ENCODE measurements at regions of chr7 and their contacts with region 1.

Region 1: DNA sequence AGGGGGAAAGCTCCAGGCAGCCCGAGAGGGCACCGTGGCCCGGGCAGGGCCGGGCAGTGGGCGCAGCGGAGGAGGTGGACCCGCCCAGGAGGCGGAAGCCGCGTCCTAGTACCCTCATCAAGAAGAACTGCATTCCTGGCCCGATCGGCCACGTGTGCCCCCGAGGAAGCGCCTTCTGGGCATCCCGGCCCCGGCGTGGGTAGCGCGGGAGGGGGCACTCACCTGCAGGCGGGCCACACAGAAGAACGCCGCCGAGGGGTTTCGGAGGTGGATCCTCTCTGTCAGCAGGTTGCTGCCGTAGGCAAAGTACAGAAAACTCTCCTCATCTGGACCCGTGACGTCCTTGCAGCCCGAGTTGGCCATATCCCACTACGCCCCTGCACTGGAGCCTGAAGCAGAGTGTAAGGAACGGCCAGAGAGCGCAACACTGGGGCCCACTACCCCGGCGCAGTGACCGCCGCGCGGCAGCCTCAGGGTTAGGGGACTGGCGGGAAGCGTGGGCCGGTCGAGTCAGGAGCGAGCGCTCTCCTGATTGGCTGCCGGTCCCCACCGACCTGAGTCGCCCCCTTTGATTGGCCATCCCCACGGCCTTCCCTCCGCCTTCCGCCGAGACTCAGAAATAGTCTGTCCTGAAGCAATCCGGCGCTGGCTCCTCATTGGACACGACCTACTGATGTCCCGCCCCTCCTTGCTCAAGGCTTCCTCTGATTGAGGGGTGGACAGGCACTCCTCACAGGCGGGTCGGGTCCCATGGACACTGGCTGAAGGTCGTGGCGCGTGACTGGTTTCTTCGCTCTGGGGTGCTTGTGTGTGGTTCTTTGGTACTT is at the start of gene GGCT:
- DNase-seq: peak; percentile 87
- ATAC-seq: peak; percentile 98
- H3K4me3 Mint-ChIP-seq: peak within 1 kb of the TSS; percentile 91
- H3K27ac Mint-ChIP-seq: peak within 1 kb of the TSS; percentile 97
- H3K4me1 Mint-ChIP-seq: peaks cover 39% of the 10 kb centered on the region
- H3K27me3 Mint-ChIP-seq: no peaks in the 10 kb centered on the region
- CTCF ChIP-seq: no peak
- total RNA-seq, gene GGCT: 22.7 and 24.4 TPM in 2 replicates

Region 2: GRCh38 chr7:30459591-30460257 is 44.8 kb before region 1 on chr7:
- CTCF ChIA-PET with region 1: no interaction called
- POLR2A ChIA-PET with region 1: no interaction called
- intact Hi-C with region 1: loop called (anchors 2 kb)
- DNase-seq: no peak
- ATAC-seq: no peak
- H3K4me3 Mint-ChIP-seq: no peak overlapping the region
- H3K27ac Mint-ChIP-seq: no peak overlapping the region
- H3K4me1 Mint-ChIP-seq: peaks cover 35% of the 10 kb centered on the region
- H3K27me3 Mint-ChIP-seq: no peaks in the 10 kb centered on the region
- CTCF ChIP-seq: no peak

Region 3: GRCh38 chr7:30478349-30479201 is 26.0 kb before region 1 on chr7 and contains the start of gene NOD1:
- CTCF ChIA-PET with region 1: no interaction called
- POLR2A ChIA-PET with region 1: interaction called, 6 read pairs
- intact Hi-C with region 1: loop called (anchors 1 kb)
- DNase-seq: peak; percentile 70
- ATAC-seq: peak; percentile 89
- H3K4me3 Mint-ChIP-seq: peak within 1 kb of the TSS; percentile 95
- H3K27ac Mint-ChIP-seq: peak within 1 kb of the TSS; percentile 87
- H3K4me1 Mint-ChIP-seq: peaks cover 54% of the 10 kb centered on the region
- H3K27me3 Mint-ChIP-seq: no peaks in the 10 kb centered on the region
- CTCF ChIP-seq: no peak
- total RNA-seq, gene NOD1: 11.7 and 14.0 TPM in 2 replicates

Region 4: GRCh38 chr7:30521532-30521931 is 17.0 kb after region 1 on chr7:
- CTCF ChIA-PET with region 1: no interaction called
- POLR2A ChIA-PET with region 1: no interaction called
- intact Hi-C with region 1: loop called (anchors 1 kb)
- DNase-seq: no peak
- ATAC-seq: no peak
- H3K4me3 Mint-ChIP-seq: no peak overlapping the region
- H3K27ac Mint-ChIP-seq: no peak overlapping the region
- H3K4me1 Mint-ChIP-seq: peaks cover 15% of the 10 kb centered on the region
- H3K27me3 Mint-ChIP-seq: no peaks in the 10 kb centered on the region
- CTCF ChIP-seq: no peak

Region 5: GRCh38 chr7:30556840-30557239 is 52.3 kb after region 1 on chr7:
- CTCF ChIA-PET with region 1: no interaction called
- POLR2A ChIA-PET with region 1: no interaction called
- intact Hi-C with region 1: no loop called
- DNase-seq: no peak
- ATAC-seq: no peak
- H3K4me3 Mint-ChIP-seq: no peak overlapping the region
- H3K27ac Mint-ChIP-seq: no peak overlapping the region
- H3K4me1 Mint-ChIP-seq: no peaks in the 10 kb centered on the region
- H3K27me3 Mint-ChIP-seq: no peaks in the 10 kb centered on the region
- CTCF ChIP-seq: no peak